ENCODE measurements at regions of chr6 and their contacts with region 1.

Region 1: DNA sequence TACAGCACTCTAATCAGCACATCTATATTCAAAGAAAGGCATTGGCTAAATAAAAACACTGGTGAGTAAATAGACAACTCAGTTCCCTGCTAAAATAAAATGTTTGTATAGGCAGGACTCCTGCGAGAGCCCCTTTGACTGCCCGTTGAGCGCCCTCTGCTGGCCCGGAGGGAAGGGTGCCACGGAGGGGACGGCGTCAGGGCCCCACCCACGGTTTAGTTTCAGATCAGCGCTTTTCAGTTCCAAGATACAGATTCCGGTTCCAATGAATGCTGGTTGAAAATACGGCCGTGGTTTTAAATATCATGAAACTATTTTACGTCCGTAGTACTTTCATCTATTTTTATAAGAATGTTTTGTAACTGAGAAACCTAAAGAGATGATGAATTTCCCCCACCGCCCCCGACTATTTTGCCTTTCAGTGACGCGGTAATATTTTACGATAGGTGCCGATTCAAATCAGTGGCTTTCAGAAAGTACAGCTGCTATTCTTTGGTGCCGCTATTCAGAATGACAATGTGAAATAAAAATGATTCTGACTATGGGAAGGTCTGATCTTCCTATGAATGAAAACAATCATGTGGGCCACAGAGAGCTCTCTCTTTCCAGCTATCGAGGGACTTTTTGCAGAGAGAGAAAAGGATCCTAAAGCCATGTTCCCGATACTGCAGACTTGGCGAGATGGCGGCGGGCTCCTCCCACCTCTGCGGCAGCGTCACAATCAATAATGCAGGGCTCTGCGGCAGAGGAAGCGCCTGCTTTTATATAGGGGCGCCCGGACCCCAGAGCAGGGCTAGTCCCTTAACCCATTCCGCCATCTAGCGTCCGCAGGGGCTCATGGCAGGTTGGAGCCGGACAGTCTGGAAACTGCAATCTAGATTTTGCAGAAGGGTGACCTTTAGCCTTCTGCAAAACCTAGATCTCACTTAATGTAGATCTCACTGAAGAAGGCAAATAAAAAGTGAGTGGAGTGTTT is 10.6 kb upstream of the CCN6 start:
- DNase-seq: peak; percentile 45
- ATAC-seq: peak; percentile 97
- H3K4me3 ChIP-seq: peak overlapping the region; percentile 94
- H3K27ac ChIP-seq: peak overlapping the region; percentile 51
- H3K4me1 ChIP-seq: no peaks in the 10 kb centered on the region
- H3K27me3 ChIP-seq: no peaks in the 10 kb centered on the region
- CTCF ChIP-seq: peak; percentile 97 to 98 (median 97)
- EP300 ChIP-seq: peak in 1 of 2 experiments; percentile 50; a peak in 1 of 4 replicates
- POLR2A ChIP-seq: 0 out of 2 replicates have a peak, but pooled peaks have one; percentile 32
- RAD21 ChIP-seq: peak; percentile 98

Region 2: GRCh38 chr6:111011360-111012142 is 1031.8 kb before region 1 on chr6:
- CTCF ChIA-PET with region 1: interaction called, 5 read pairs
- POLR2A ChIA-PET with region 1: no interaction called
- RAD21 ChIA-PET with region 1: interaction called, 6 read pairs
- SMC1A ChIA-PET with region 1: interaction called, 8 read pairs
- in situ Hi-C with region 1: no loop called
- intact Hi-C with region 1: loop called (anchors 2 kb)
- DNase-seq: peak; percentile 15
- ATAC-seq: peak; percentile 90
- H3K4me3 ChIP-seq: no peak overlapping the region
- H3K27ac ChIP-seq: no peak overlapping the region
- H3K4me1 ChIP-seq: no peaks in the 10 kb centered on the region
- H3K27me3 ChIP-seq: no peaks in the 10 kb centered on the region
- CTCF ChIP-seq: peak; percentile 51 to 75 (median 53); a peak in 5 of 6 replicates
- EP300 ChIP-seq: no peak
- POLR2A ChIP-seq: no peak
- RAD21 ChIP-seq: peak; percentile 93

Region 3: DNA sequence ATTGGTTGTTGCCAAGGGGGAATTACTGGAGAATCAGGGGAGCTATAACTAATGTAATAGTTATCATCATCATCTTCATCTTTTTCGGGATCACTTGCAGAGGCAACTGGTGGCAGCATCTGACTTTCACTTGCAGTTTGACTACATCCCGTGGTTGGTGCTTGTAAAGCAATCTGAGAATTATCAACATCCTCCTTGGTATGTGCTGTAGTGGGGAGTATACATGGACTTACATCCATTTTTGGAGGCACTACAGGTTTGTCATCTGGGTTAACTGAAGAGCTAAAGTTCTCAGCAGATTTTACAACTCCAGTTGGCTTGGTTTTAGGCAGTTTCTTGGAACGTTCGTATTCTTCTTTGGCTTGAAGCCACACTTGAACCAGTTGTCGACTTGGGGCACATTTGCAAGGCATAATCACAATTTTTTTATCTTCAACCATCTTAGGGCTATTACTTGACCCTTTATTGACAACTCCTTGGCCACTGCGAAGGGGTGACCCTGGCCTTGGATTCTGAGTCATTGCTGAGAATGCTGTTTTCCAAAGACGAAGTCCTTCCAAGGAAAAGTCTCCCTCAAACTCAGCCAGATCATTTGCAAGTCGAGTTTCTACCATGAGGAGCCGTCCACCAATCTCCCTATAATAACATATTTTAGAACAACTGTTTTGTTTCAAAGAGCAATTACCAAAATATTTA is 675.8 kb before region 1 on chr6:
- CTCF ChIA-PET with region 1: no interaction called
- POLR2A ChIA-PET with region 1: no interaction called
- RAD21 ChIA-PET with region 1: no interaction called
- SMC1A ChIA-PET with region 1: no interaction called
- in situ Hi-C with region 1: no loop called
- intact Hi-C with region 1: loop called (anchors 5 kb)
- DNase-seq: peak; percentile 32
- ATAC-seq: peak; percentile 83
- H3K4me3 ChIP-seq: no peak overlapping the region
- H3K27ac ChIP-seq: no peak overlapping the region
- H3K4me1 ChIP-seq: peaks cover 12% of the 10 kb centered on the region
- H3K27me3 ChIP-seq: no peaks in the 10 kb centered on the region
- CTCF ChIP-seq: no peak
- EP300 ChIP-seq: no peak
- POLR2A ChIP-seq: no peak
- RAD21 ChIP-seq: no peak

Region 4: DNA sequence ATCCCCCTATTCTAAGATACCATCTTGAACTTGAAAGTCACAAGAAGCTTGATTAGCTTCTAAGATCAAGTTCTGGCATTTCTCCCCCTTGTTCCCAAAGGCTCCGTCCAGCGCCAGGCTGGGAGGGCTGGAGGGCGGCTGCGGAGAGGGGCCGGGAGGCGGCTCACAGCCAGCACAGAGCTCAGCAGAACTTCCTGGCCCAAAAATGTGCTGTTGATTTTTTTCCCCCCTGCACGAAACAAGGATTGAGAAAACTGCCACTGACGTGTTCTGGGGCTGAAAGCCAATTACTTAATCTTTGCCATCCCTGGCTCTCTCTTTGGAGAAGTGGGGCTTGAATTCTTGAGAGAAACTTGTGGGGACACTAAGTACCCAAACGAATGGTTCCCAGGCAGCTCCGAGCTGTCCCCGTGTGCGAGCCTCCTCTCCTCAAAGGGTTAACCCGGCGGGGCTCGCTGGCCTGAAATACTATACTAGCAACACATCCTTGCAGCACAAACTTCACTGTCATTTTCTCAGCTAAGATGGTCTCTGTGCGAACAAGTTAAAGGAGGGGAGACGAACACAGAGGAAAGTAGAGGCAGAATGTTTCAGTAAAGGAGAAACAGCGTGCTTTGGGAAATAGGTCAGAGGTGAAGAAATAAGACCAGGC is 438.1 kb before region 1 on chr6:
- CTCF ChIA-PET with region 1: interaction called, 4 read pairs
- POLR2A ChIA-PET with region 1: no interaction called
- RAD21 ChIA-PET with region 1: interaction called, 11 read pairs
- SMC1A ChIA-PET with region 1: no interaction called
- in situ Hi-C with region 1: no loop called
- intact Hi-C with region 1: loop called (anchors 5 kb)
- DNase-seq: no peak
- ATAC-seq: peak; percentile 65
- H3K4me3 ChIP-seq: peak overlapping the region; percentile 74
- H3K27ac ChIP-seq: peak overlapping the region; percentile 87
- H3K4me1 ChIP-seq: peaks cover 11% of the 10 kb centered on the region; the same call in 1 of the 2 replicates
- H3K27me3 ChIP-seq: no peaks in the 10 kb centered on the region
- CTCF ChIP-seq: no peak
- EP300 ChIP-seq: no peak
- POLR2A ChIP-seq: no peak
- RAD21 ChIP-seq: no peak

Region 5: GRCh38 chr6:111777357-111777756 is 266.0 kb before region 1 on chr6:
- CTCF ChIA-PET with region 1: interaction called, 4 read pairs
- POLR2A ChIA-PET with region 1: no interaction called
- RAD21 ChIA-PET with region 1: no interaction called
- SMC1A ChIA-PET with region 1: no interaction called
- in situ Hi-C with region 1: no loop called
- intact Hi-C with region 1: loop called (anchors 5 kb)
- DNase-seq: no peak
- ATAC-seq: peak; percentile 82
- H3K4me3 ChIP-seq: no peak overlapping the region
- H3K27ac ChIP-seq: peak overlapping the region; percentile 61
- H3K4me1 ChIP-seq: peaks cover 22% of the 10 kb centered on the region
- H3K27me3 ChIP-seq: no peaks in the 10 kb centered on the region
- CTCF ChIP-seq: peak; percentile 39 to 50 (median 43); a peak in 4 of 6 replicates
- EP300 ChIP-seq: no peak
- POLR2A ChIP-seq: no peak
- RAD21 ChIP-seq: peak; percentile 72

Region 6: DNA sequence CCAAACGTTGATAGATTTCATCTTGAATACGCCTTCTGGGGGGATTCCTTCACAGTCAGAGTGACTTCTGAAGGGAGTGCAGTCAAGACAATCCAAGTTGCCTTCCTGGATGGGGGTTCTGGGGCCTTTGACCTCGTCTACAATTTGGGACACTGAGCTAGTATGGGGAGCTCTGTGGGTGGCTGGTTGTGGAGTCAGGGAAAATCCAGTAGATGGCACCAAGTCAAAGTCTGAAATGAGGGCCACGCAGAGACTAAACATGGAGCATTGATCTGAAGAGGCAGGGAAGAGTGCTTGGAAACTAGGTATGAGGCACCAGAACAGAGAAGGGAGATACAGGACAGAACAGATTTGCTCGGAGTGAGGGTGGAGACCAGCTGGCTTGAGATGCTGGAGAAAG is 33.0 kb before region 1 on chr6:
- CTCF ChIA-PET with region 1: interaction called, 73 read pairs
- POLR2A ChIA-PET with region 1: interaction called, 3 read pairs
- RAD21 ChIA-PET with region 1: interaction called, 12 read pairs
- SMC1A ChIA-PET with region 1: interaction called, 53 read pairs
- in situ Hi-C with region 1: no loop called
- intact Hi-C with region 1: no loop called
- DNase-seq: no peak
- ATAC-seq: peak; percentile 32; the same call in 1 of the 3 replicates
- H3K4me3 ChIP-seq: no peak overlapping the region
- H3K27ac ChIP-seq: no peak overlapping the region
- H3K4me1 ChIP-seq: no peaks in the 10 kb centered on the region
- H3K27me3 ChIP-seq: no peaks in the 10 kb centered on the region
- CTCF ChIP-seq: peak; percentile 7 to 25 (median 23); a peak in 4 of 6 replicates
- EP300 ChIP-seq: no peak
- POLR2A ChIP-seq: no peak
- RAD21 ChIP-seq: peak; percentile 64; the same call in 1 of the 2 replicates

Region 7: GRCh38 chr6:112163295-112164257 is 120.3 kb after region 1 on chr6:
- CTCF ChIA-PET with region 1: interaction called, 17 read pairs
- POLR2A ChIA-PET with region 1: no interaction called
- RAD21 ChIA-PET with region 1: interaction called, 3 read pairs
- SMC1A ChIA-PET with region 1: no interaction called
- in situ Hi-C with region 1: no loop called
- intact Hi-C with region 1: no loop called
- DNase-seq: peak; percentile 7
- ATAC-seq: peak; percentile 100
- H3K4me3 ChIP-seq: no peak overlapping the region
- H3K27ac ChIP-seq: no peak overlapping the region
- H3K4me1 ChIP-seq: peaks cover 3% of the 10 kb centered on the region; the same call in 1 of the 2 replicates
- H3K27me3 ChIP-seq: peaks cover 3 to 14% of the 10 kb centered on the region in 2 experiments
- CTCF ChIP-seq: peak; percentile 82 to 96 (median 96)
- EP300 ChIP-seq: no peak
- POLR2A ChIP-seq: no peak
- RAD21 ChIP-seq: peak; percentile 90

Region 8: GRCh38 chr6:112188906-112189305 is 145.6 kb after region 1 on chr6:
- CTCF ChIA-PET with region 1: no interaction called
- POLR2A ChIA-PET with region 1: no interaction called
- RAD21 ChIA-PET with region 1: no interaction called
- SMC1A ChIA-PET with region 1: no interaction called
- in situ Hi-C with region 1: no loop called
- intact Hi-C with region 1: no loop called
- DNase-seq: no peak
- ATAC-seq: no peak
- H3K4me3 ChIP-seq: no peak overlapping the region
- H3K27ac ChIP-seq: no peak overlapping the region
- H3K4me1 ChIP-seq: no peaks in the 10 kb centered on the region
- H3K27me3 ChIP-seq: no peaks in the 10 kb centered on the region
- CTCF ChIP-seq: no peak
- EP300 ChIP-seq: no peak
- POLR2A ChIP-seq: no peak
- RAD21 ChIP-seq: no peak

Region 9: DNA sequence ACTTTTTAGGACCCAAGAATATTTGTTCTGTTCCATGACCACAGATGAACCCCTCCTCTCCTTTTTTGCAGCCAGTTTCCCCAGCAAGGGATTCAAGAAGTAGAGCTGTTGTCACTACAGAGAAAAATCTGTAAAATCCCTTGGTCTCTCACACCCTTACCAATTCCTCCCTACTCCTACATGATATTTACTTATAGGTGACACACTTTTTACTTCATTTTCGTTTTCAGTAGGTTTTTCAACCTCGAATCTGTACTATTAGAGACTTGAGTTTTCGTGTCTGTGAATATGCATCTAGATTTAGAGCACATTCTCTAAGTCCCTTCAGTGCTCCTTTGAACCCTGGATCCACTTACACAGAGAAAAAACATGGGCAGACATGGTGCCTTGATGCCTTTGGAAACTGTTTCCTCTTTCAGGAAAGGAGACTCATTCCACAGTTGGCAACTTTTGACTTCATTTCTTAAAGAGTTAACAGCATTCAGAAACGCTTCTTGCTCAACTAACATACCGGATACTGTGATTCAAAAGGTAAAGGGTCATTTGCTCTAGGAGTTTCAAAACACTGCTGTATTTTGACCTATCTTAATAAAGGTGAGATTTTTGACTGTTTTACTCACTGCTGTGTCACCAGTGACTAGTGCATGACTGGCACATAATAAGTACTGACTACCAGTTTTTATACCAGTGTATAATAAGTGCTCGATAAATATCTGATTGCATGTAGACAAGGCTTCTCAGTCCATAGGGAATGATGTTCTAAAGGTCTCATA is 160.4 kb after region 1 on chr6:
- CTCF ChIA-PET with region 1: no interaction called
- POLR2A ChIA-PET with region 1: no interaction called
- RAD21 ChIA-PET with region 1: no interaction called
- SMC1A ChIA-PET with region 1: no interaction called
- in situ Hi-C with region 1: no loop called
- intact Hi-C with region 1: no loop called
- DNase-seq: no peak
- ATAC-seq: peak; percentile 54
- H3K4me3 ChIP-seq: no peak overlapping the region
- H3K27ac ChIP-seq: no peak overlapping the region
- H3K4me1 ChIP-seq: no peaks in the 10 kb centered on the region; the same call in 1 of the 2 replicates
- H3K27me3 ChIP-seq: no peaks in the 10 kb centered on the region
- CTCF ChIP-seq: no peak
- EP300 ChIP-seq: no peak
- POLR2A ChIP-seq: no peak
- RAD21 ChIP-seq: no peak